WTC11 (cell line): ENCODE measurements at regions of chr1 and their contacts with region 1.

Region 1: GRCh38 chr1:240455228-240455821 is 156.6 kb downstream of the GREM2 start:
- DNase-seq: no peak
- ATAC-seq: peak; percentile 82
- H3K4me3 Mint-ChIP-seq: no peak overlapping the region
- H3K27ac Mint-ChIP-seq: no peak overlapping the region
- H3K4me1 Mint-ChIP-seq: no peaks in the 10 kb centered on the region
- H3K27me3 Mint-ChIP-seq: no peaks in the 10 kb centered on the region
- CTCF ChIP-seq: peak; percentile 42; the same call in 1 of the 2 replicates

Region 2: GRCh38 chr1:240337781-240338180 is 117.5 kb before region 1 on chr1:
- CTCF ChIA-PET with region 1: no interaction called
- POLR2A ChIA-PET with region 1: no interaction called
- DNase-seq: no peak
- ATAC-seq: no peak
- H3K4me3 Mint-ChIP-seq: no peak overlapping the region
- H3K27ac Mint-ChIP-seq: no peak overlapping the region
- H3K4me1 Mint-ChIP-seq: no peaks in the 10 kb centered on the region
- H3K27me3 Mint-ChIP-seq: no peaks in the 10 kb centered on the region
- CTCF ChIP-seq: no peak

Region 3: DNA sequence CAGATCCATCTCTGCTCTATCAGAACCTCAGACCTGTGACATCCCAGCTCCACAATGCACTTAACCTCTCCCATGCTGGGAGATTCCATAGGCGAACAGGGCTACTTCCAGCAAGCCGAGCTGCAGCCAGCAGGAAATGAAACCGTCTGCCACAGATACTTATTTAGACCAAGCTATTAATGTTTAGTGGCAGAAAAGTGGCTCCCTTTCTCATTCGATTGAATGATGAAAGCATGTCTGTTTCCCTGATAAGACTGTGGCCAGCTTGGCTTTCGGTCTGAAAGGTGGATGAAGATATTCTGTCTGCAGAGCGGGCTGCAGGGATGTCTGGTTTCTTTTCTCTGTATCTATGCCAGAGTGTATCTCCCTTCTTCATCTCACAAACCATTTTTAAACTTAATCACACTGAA is 10.2 kb after region 1 on chr1:
- CTCF ChIA-PET with region 1: interaction called, 12 read pairs
- POLR2A ChIA-PET with region 1: no interaction called
- DNase-seq: peak; percentile 12
- ATAC-seq: peak; percentile 92
- H3K4me3 Mint-ChIP-seq: no peak overlapping the region
- H3K27ac Mint-ChIP-seq: no peak overlapping the region
- H3K4me1 Mint-ChIP-seq: peaks cover 15% of the 10 kb centered on the region
- H3K27me3 Mint-ChIP-seq: no peaks in the 10 kb centered on the region
- CTCF ChIP-seq: no peak

Region 4: DNA sequence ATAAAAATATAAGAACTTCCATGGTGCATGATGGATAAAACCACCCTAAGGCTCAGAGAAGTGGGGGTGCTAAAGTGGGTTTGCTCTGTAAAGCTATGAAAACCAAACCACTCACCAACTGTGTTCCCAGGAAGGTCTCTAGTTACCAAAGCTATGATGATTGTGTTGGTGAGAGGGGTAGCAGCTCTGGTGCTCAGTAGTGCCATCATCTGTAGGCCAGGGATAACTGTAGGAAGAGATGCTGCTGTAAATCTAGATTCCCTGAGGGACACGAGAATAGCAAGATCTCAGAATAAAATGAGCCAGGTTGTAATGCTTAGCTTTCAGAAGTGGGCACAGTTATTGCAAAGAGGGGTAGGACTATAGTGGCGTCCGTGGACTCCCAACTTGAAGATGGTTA is 32.2 kb after region 1 on chr1:
- CTCF ChIA-PET with region 1: interaction called, 10 read pairs
- POLR2A ChIA-PET with region 1: no interaction called
- DNase-seq: no peak
- ATAC-seq: peak; percentile 69
- H3K4me3 Mint-ChIP-seq: no peak overlapping the region
- H3K27ac Mint-ChIP-seq: no peak overlapping the region
- H3K4me1 Mint-ChIP-seq: peaks cover 19% of the 10 kb centered on the region
- H3K27me3 Mint-ChIP-seq: peaks cover 39% of the 10 kb centered on the region
- CTCF ChIP-seq: no peak

Region 5: GRCh38 chr1:240691521-240692338 is 236.4 kb after region 1 on chr1:
- CTCF ChIA-PET with region 1: interaction called, 10 read pairs
- POLR2A ChIA-PET with region 1: no interaction called
- DNase-seq: peak; percentile 50
- ATAC-seq: peak; percentile 96
- H3K4me3 Mint-ChIP-seq: no peak overlapping the region
- H3K27ac Mint-ChIP-seq: no peak overlapping the region
- H3K4me1 Mint-ChIP-seq: peaks cover 19% of the 10 kb centered on the region
- H3K27me3 Mint-ChIP-seq: no peaks in the 10 kb centered on the region
- CTCF ChIP-seq: no peak